ENCODE measurements at regions of chr22 and their contacts with region 1.

Region 1: GRCh38 chr22:36873680-36874537 is 13.1 kb downstream of the NCF4 start:
- DNase-seq: peak in 2 of 3 donors; percentile 56 to 69
- ATAC-seq: peak; percentile 94 to 98 (median 96)
- H3K4me3 ChIP-seq: no peak overlapping the region
- H3K27ac ChIP-seq: peak overlapping the region; percentile 23 to 56 (median 24)
- H3K4me1 ChIP-seq: peaks cover 0 to 12% (median 5%) of the 10 kb centered on the region in 4 donors
- H3K27me3 ChIP-seq: no peaks in the 10 kb centered on the region
- CTCF ChIP-seq: peak; percentile 56 to 75 (median 68)
- POLR2A ChIP-seq: no peak

Region 2: GRCh38 chr22:36966851-36967540 is 93.1 kb after region 1 on chr22:
- intact Hi-C with region 1: loop called (anchors 10 kb)
- DNase-seq: no peak
- ATAC-seq: no peak
- H3K4me3 ChIP-seq: no peak overlapping the region
- H3K27ac ChIP-seq: no peak overlapping the region
- H3K4me1 ChIP-seq: no peaks in the 10 kb centered on the region
- H3K27me3 ChIP-seq: no peaks in the 10 kb centered on the region
- CTCF ChIP-seq: no peak
- POLR2A ChIP-seq: no peak